Left cardiac atrium (tissue), 4 donors: ENCODE measurements at regions of chr4 and their contacts with region 1.

Region 1: DNA sequence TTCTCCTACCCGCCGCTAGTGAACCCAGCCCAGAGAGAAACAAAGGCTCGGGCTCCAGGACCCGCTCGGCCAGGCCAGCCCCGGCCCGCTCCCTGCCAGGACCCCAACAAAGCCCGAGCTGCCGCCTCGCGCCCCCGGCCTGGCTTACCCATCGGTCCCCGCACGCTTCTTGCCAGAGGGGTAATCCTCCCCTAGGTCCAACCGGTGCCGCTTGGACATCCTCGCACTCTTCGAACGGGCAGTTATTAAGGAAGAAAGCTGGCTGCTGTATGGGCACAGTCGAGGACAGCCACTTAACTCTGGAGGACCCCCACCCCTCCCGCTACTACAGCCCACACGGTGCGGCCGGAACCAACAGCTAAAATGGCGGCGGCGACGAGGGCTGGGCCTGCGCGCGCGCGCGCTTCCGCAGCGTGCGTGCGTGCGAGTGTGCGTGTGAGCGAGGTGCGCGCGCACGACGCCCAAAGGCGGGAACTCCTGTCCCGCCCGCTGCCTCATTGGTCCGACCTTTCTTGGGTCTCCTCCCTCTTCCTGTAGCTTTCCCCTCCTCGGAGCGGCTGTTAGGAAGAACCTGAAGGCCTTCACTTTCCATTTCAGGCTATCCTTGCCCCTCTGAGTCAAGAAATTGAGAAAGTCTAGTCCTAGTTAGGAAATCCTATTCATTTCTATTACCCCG is at the start of gene DHX15:
- DNase-seq: peak; percentile 97
- ATAC-seq: peak; percentile 97 to 99
- total RNA-seq, gene DHX15: 53.2 to 87.3 TPM

Region 2: DNA sequence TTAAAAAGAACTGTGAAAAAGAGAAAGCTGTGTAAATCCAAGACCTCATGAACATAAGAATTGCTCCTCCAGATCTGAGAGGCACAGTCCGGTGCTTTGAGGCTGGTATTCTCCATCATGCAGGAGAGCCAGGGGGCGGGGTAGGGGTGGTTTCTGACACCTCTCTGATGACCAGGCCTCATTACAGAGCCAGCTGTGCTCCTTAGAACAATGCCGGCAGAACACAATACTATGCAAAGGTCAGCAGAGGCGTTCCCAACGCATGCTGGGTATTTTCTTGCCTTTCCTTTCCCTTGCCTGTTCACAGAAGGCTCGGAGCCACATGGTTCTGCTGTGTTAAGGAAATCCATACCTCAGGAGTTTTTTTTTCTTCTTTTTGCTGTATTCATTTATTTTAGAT is 119.8 kb after region 1 on chr4:
- intact Hi-C with region 1: no loop called
- DNase-seq: no peak
- ATAC-seq: no peak

Region 3: DNA sequence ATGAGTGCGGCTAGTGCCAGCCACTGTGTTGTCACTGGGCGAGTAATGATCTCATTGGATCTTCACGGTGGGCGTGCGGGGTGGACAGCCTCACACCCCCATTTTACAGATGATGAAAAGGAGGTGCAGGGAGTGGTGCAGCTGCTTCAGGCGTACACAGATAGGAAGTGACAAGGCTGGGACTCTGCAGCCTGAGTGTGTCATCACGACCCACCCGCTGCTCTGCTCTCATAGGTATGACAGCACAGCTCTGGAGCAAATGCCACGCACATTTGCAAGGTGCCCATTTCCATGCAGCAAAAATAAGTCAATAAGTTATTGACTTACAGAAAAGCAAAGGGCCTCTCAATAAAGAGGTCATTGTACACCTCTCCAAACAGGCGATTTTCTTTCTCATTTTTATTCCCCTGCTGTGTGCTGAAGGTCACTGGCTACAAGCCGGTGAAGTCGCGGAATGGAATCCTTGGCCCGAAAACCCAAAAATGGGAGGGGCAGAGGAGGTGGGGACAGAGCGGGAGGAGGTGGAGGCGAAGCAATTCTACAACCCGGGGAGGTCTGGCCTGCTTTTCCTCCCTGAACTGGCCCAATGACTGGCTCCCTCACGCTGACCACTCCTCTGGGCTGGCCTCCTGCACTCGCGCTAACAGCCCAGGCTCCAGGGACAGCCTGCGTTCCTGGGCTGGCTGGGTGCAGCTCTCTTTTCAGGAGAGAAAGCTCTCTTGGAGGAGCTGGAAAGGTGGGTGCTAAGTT is 210.8 kb after region 1 on chr4 and contains the start of gene SOD3:
- intact Hi-C with region 1: loop called in 1 of 2 experiments (anchors 10 kb)
- DNase-seq: peak; percentile 83
- ATAC-seq: peak; percentile 96 to 97
- total RNA-seq, gene SOD3: 69.4 to 120 TPM